ENCODE measurements at regions of chr17 and their contacts with region 1.

Region 1: GRCh38 chr17:1829592-1830257 is at the starts of genes RPA1 and SMYD4:
- DNase-seq: peak; percentile 92
- H3K4me3 Mint-ChIP-seq: peak within 1 kb of the TSS; percentile 96
- H3K27ac Mint-ChIP-seq: peak within 1 kb of the TSS; percentile 84
- H3K4me1 Mint-ChIP-seq: peaks cover 69% of the 10 kb centered on the region
- H3K27me3 Mint-ChIP-seq: no peaks in the 10 kb centered on the region
- total RNA-seq, gene RPA1: 176 to 186 TPM
- total RNA-seq, gene SMYD4: 27.4 to 29.3 TPM

Region 2: GRCh38 chr17:1764284-1764683 is 65.4 kb before region 1 on chr17:
- CTCF ChIA-PET with region 1: no interaction called
- POLR2A ChIA-PET with region 1: interaction called, 13 read pairs
- DNase-seq: peak; percentile 81
- H3K4me3 Mint-ChIP-seq: no peak overlapping the region
- H3K27ac Mint-ChIP-seq: peak overlapping the region; percentile 89
- H3K4me1 Mint-ChIP-seq: peaks cover 31% of the 10 kb centered on the region
- H3K27me3 Mint-ChIP-seq: no peaks in the 10 kb centered on the region

Region 3: GRCh38 chr17:1810450-1811103 is 19.1 kb before region 1 on chr17:
- CTCF ChIA-PET with region 1: no interaction called
- POLR2A ChIA-PET with region 1: no interaction called
- DNase-seq: no peak
- H3K4me3 Mint-ChIP-seq: no peak overlapping the region
- H3K27ac Mint-ChIP-seq: no peak overlapping the region
- H3K4me1 Mint-ChIP-seq: no peaks in the 10 kb centered on the region
- H3K27me3 Mint-ChIP-seq: no peaks in the 10 kb centered on the region

Region 4: DNA sequence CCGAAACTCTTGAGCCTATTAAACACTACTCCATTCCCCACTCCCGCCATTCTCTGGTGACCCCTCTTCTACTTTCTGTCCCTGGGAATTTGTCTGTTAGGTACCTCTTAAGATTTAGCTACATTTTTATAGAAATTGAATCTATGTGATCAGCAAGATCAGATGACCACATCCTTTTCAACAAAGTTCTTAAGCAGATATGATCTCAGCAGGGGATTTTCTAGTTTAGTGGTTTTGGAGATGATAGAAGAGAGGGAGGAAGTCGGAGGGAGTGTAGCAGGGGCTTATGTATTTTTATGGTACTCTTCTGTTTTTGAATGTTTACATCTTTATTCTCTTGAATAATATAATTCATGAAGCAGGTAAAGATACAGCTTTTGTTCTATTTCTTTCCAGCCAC is 40.9 kb after region 1 on chr17:
- CTCF ChIA-PET with region 1: interaction called, 7 read pairs
- POLR2A ChIA-PET with region 1: interaction called, 13 read pairs
- DNase-seq: no peak
- H3K4me3 Mint-ChIP-seq: peak overlapping the region; percentile 21
- H3K27ac Mint-ChIP-seq: peak overlapping the region; percentile 81
- H3K4me1 Mint-ChIP-seq: peaks cover 62% of the 10 kb centered on the region
- H3K27me3 Mint-ChIP-seq: no peaks in the 10 kb centered on the region

Measured in activated CD4-positive, alpha-beta memory T cell treated with anti-CD3 and anti-CD28 coated beads, Interleukin-2, amount 10 ng/mL, durations not matched to agents 7 days and 5 days (primary cell).